ENCODE measurements at regions of chr4 and their contacts with region 1.

Region 1: DNA sequence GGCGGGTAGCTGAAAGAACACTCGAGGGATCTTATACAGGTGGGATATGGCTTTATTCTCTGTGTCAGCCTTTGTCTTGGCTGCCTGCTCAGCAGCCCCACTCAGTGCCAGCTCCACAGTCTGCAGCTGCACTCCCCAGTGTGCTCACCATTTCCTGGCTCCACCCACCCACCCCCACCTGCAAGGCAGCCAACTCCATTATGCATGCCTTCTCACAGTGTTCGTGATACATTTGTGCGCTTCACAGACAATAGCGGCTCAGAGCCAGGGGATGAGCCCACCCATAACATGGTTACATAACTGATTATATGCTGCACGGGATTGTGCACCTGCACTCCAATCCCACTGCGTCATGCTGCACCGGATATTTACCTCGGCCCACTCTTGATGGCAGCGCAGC is 8.8 kb upstream of the TMEM128 start:
- DNase-seq: no peak
- ATAC-seq: no peak
- H3K4me3 ChIP-seq: no peak overlapping the region
- H3K27ac ChIP-seq: no peak overlapping the region
- H3K4me1 ChIP-seq: no peaks in the 10 kb centered on the region
- H3K27me3 ChIP-seq: no peaks in the 10 kb centered on the region
- CTCF ChIP-seq: no peak

Region 2: GRCh38 chr4:4200624-4201023 is 56.2 kb before region 1 on chr4:
- intact Hi-C with region 1: no loop called
- DNase-seq: no peak
- ATAC-seq: no peak
- H3K4me3 ChIP-seq: no peak overlapping the region
- H3K27ac ChIP-seq: no peak overlapping the region
- H3K4me1 ChIP-seq: no peaks in the 10 kb centered on the region
- H3K27me3 ChIP-seq: no peaks in the 10 kb centered on the region
- CTCF ChIP-seq: no peak

Region 3: DNA sequence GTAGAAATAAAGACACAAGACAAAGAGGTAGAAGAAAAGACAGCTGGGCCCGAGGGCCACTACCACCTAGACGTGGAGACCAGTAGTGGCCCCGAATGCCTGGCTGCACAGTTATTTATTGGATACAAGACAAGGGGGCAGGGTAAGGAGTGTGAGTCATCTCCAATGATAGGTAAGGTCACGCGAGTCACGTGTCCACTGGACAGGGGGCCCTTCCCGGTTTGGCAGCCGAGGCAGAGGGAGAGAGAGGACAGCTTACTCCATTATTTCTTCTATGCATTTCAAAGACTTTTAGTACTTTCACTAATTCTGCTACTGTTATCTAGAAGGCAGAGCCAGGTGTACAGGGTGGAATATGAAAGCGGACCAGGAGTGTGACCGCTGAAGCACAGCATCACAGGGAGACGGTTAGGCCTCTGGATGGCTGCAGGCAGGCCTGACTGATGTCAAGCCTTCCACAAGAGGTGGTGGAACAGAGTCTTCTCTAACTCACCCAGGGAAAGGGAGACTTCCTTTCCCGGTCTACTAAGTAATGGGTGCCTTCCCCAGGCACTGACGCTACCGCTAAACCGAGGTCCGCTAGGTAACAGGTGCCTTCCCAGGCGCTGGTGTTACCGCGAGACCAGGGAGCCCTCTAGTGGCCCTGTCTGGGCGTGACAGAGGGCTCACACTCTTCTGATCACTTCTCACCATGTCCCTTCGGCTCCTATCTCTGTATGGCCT is 78.2 kb after region 1 on chr4:
- intact Hi-C with region 1: loop called (anchors 10 kb)
- DNase-seq: peak; percentile 80
- ATAC-seq: peak; percentile 73
- H3K4me3 ChIP-seq: no peak overlapping the region
- H3K27ac ChIP-seq: no peak overlapping the region
- H3K4me1 ChIP-seq: no peaks in the 10 kb centered on the region
- H3K27me3 ChIP-seq: no peaks in the 10 kb centered on the region
- CTCF ChIP-seq: peak; percentile 77

Measured in upper lobe of right lung (tissue), 1 donor.